Tibial artery (tissue), 4 donors: ENCODE measurements at regions of chr3 and their contacts with region 1.

Region 1: DNA sequence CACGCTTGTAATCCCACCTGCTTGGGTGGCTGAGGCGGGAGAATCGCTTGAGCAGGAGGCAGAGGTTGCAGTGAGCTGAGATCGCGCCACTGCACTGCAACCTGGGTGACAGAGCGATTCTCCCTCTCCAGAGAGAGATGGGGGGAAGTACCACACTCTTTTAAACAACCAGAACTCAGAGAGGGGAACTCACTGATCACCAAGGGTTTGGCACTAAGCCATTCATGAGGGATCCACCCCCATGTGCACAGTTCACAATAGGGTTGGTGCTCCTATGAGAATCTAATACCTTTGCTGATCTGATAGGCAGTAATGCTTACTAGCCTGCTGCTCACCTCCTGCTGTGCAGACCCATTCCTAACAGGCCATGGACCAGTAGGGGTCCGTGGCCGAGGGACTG is 51.6 kb downstream of the QTRT2 start:
- DNase-seq: no peak
- H3K4me3 ChIP-seq: no peak overlapping the region
- H3K27ac ChIP-seq: no peak overlapping the region
- H3K4me1 ChIP-seq: no peaks in the 10 kb centered on the region
- H3K27me3 ChIP-seq: no peaks in the 10 kb centered on the region
- CTCF ChIP-seq: no peak

Region 2: DNA sequence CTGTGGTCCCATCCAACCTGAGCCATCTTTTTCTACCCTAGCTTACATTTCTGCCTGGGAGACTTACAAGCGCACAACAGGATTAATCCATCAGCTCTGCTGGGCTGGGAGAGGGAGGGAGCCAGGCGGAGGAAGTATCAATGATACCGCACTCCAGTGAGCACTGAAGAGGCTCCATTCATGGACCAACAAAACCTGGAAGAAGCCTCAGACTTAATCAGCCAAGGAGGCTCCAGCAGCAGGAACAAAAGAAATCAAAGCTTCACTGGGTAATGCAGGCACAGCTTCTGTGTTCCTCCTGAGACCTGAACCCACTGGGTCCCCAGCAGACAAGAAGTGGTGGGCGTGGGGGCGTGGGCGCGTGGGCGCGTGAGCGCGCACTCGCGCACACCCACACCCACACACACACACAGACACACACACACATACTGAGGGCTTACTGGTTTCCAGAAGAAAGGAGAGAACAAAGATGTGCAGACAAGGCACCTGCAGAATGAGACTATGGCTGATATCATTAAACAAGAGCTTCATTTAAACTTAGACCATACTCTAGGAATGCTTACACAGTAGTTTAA is 983.8 kb before region 1 on chr3:
- intact Hi-C with region 1: loop called (anchors 5 kb)
- DNase-seq: no peak
- H3K4me3 ChIP-seq: no peak overlapping the region
- H3K27ac ChIP-seq: no peak overlapping the region
- H3K4me1 ChIP-seq: no peaks in the 10 kb centered on the region
- H3K27me3 ChIP-seq: no peaks in the 10 kb centered on the region
- CTCF ChIP-seq: no peak